Heart right ventricle (tissue), 16 donors: ENCODE measurements at regions of chr9 and their contacts with region 1.

Region 1: GRCh38 chr9:131393622-131394463 is at the start of gene PRRC2B:
- DNase-seq: peak; percentile 85 to 90
- ATAC-seq: peak; percentile 70 to 90 (median 81)
- H3K4me3 ChIP-seq: peak within 1 kb of the TSS; percentile 51 to 88 (median 74)
- H3K27ac ChIP-seq: peak within 1 kb of the TSS; percentile 82 to 99 (median 97)
- H3K4me1 ChIP-seq: peaks cover 24 to 50% (median 45%) of the 10 kb centered on the region in 9 donors
- H3K27me3 ChIP-seq: no peaks in the 10 kb centered on the region
- CTCF ChIP-seq: peak in 8 of 9 donors; percentile 29 to 83 (median 68)
- total RNA-seq, gene PRRC2B: 107 to 153 (median 132) TPM

Region 2: DNA sequence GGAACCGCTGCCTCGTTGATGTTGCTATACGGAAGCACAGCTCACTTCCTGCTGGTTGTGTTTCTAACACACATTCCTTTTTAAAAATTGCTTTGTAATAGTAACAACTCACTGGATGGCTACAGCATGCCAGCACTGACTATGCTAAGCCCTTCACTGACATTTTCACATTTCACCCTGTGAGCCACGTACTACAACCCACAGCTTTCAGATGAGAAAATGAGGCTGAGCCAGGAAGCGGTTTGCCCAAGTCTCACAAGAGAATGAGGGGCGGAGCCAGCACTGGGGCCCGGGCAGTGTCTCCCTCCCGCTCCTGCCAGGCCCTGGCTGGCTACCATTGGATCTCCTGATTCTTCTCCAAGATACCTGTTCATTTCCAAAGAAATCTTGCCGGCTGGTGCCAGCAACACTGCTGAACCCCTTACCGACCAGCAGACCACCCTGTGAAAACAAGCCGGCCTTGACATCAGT is 155.9 kb before region 1 on chr9:
- intact Hi-C with region 1: no loop called
- DNase-seq: peak; percentile 75
- ATAC-seq: peak; percentile 30 to 68 (median 62)
- H3K4me3 ChIP-seq: peak overlapping the region in 5 of 10 donors; percentile 2 to 25 (median 9)
- H3K27ac ChIP-seq: peak overlapping the region; percentile 46 to 95 (median 90)
- H3K4me1 ChIP-seq: peaks cover 10 to 62% (median 43%) of the 10 kb centered on the region in 9 donors
- H3K27me3 ChIP-seq: no peaks in the 10 kb centered on the region
- CTCF ChIP-seq: no peak

Region 3: DNA sequence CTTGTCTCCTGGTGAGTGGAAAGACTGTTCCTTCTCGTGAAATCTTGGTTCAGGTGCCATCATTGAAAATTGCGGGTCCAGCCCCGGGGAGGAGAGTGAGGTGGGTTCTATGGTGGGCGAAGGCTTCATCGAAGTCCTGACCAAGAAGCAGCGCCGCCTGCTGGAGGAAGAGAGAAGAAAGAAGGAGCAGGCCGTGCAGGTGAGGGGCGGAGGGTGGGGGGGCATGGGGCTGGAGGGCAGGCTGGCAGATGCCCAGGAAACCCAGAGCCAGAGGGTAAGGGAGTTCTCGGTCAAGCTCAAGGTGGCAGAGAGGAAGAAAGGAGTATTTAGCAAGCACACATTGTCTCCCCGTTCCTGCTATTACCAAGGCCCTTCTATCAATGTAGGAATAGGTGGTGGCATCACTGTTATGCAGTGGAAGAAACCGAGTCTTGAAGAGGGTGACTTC is 84.6 kb after region 1 on chr9:
- intact Hi-C with region 1: loop called in 4 of 10 experiments (anchors 5 to 10 kb)
- DNase-seq: peak; percentile 38 to 53
- ATAC-seq: no peak
- H3K4me3 ChIP-seq: no peak overlapping the region
- H3K27ac ChIP-seq: peak overlapping the region in 1 of 10 donors; percentile 79
- H3K4me1 ChIP-seq: peaks cover 2 to 51% (median 24%) of the 10 kb centered on the region in 9 donors
- H3K27me3 ChIP-seq: no peaks in the 10 kb centered on the region
- CTCF ChIP-seq: peak; percentile 34 to 69 (median 62)